ENCODE measurements at regions of chr3 and their contacts with region 1.

Region 1: DNA sequence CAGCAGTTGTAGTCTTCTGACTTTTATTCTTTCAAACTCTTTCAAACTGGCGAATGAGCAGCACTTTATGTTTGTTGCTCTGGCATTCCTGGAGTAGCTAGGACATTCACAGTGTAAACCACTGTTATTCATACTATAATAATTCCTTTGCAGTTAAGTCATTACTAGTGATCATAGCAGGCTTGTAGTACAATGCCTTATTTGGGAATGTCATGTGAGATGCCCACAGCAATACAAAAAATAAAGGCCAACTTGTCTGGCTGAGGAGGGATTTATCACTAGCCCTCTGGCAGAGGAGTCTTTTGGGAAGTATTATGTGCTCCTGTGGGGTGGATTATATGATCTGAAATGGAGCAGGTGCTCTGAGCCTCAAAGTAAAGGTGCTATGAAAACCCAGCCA is 197.2 kb downstream of the VGLL3 start:
- DNase-seq: peak; percentile 64 to 98
- H3K4me3 ChIP-seq: no peak overlapping the region
- H3K4me1 ChIP-seq: peaks cover 16% of the 10 kb centered on the region
- H3K27me3 ChIP-seq: no peaks in the 10 kb centered on the region

Region 2: DNA sequence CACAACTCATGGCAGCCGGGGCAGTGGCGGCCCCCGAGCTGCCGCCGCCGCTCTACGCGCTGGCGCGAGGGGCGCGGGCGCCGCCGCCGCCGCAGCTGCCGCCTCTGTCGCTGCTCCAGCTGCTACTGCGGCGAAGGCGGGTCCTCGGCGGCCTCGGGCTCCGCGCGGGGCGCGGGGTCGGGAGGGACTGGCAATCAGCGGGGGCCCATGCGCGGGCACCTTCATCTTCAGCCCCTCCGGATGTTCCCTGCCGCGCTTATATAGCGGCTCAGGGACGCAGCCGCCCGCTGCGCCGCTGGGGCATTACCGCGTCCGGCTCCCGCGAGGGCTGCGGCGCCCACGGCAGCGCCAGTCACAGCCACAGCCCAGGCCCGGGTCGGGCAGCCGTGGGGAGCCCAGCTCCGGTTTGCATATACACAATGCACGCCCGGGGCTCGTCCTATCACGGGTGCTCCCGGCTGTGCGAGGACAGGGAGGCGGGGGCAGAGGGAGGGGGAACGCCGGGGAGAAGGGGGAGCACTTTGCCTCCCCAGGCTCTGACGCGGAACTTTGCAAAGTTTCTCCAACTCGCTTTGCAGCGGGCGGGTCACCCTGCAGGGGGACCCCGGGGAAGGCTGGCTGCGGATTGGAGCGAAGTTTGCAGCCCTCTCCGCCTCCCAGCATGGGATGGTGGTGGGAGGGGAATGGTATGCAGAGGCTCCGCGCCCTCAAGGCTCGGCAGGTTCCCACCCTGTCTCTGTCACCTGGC is 197.1 kb after region 1 on chr3 and contains the start of gene VGLL3:
- in situ Hi-C with region 1: loop called (anchors 25 kb)
- DNase-seq: peak; percentile 71 to 84
- H3K4me3 ChIP-seq: peak within 1 kb of the TSS; percentile 65
- H3K4me1 ChIP-seq: peaks cover 15% of the 10 kb centered on the region
- H3K27me3 ChIP-seq: no peaks in the 10 kb centered on the region

Region 3: DNA sequence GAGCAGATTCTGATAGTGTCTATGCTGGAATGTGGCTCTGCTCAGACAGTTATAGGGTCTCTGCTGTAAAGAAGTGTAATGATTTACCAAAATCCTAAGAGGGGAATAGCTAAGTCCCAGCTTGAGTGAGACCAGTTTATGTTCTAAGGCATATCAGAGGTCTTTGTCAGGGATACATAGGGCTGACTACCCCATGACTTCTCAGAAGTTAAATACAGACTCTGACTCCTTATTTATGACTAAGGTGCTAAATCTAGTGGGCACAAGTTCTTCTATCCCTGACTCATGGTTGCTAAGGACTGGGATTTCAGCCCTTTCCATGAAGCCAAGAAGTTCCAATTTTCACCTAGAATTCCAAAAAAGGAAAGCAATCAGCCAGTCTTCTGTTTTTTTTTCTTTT is 675.2 kb after region 1 on chr3:
- in situ Hi-C with region 1: no loop called
- DNase-seq: no peak
- H3K4me3 ChIP-seq: no peak overlapping the region
- H3K4me1 ChIP-seq: no peaks in the 10 kb centered on the region
- H3K27me3 ChIP-seq: no peaks in the 10 kb centered on the region

Measured in HAP-1 (cell line).